Activated B cell treated with CpG ODN at 0.5 μM for 24 hours (primary cell): ENCODE measurements at regions of chr5 and their contacts with region 1.

Region 1: DNA sequence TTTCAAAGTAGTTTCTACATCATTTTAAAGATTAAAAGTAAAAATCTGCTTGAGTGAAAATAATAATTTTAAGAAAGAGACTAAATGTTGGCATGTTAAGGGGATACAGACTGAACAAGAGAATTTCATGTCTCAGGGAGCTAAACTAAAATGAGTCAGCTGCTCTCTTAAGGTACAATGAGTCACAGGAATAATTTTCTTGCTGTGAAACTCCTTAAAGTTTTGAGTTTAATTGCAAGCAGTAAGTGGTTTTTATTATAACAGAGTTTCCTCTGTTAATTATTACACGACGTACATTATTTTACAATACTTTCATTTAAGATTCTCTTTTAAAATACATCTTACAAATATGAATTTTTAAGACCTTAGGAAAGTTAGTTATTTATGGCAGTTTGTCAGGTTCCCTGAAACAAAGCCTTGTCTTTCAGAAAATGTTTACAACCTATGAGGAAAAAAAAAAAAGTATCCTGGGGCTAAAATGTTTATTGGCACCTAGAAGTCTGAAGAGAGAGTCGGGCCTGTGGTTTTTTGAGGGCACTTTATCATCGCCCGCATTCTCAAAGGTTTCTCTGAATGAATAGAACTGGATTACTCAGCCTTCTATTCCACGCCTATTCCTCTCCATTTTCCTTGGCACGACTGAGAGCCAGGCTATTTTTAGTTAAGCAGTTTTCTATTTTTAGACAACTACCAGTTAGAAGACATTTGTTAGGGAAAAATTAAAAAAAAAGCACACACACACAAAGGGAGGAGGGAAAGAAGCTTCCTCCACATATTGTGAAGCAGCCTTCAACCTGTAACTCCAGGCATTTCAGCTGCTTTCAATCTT is 97.4 kb downstream of the MEF2C start:
- DNase-seq: no peak
- ATAC-seq: peak; percentile 52
- H3K4me3 Mint-ChIP-seq: peak overlapping the region; percentile 69
- H3K27ac Mint-ChIP-seq: peak overlapping the region; percentile 86
- H3K4me1 Mint-ChIP-seq: peaks cover 66% of the 10 kb centered on the region
- H3K27me3 Mint-ChIP-seq: no peaks in the 10 kb centered on the region
- CTCF ChIP-seq: no peak

Region 2: DNA sequence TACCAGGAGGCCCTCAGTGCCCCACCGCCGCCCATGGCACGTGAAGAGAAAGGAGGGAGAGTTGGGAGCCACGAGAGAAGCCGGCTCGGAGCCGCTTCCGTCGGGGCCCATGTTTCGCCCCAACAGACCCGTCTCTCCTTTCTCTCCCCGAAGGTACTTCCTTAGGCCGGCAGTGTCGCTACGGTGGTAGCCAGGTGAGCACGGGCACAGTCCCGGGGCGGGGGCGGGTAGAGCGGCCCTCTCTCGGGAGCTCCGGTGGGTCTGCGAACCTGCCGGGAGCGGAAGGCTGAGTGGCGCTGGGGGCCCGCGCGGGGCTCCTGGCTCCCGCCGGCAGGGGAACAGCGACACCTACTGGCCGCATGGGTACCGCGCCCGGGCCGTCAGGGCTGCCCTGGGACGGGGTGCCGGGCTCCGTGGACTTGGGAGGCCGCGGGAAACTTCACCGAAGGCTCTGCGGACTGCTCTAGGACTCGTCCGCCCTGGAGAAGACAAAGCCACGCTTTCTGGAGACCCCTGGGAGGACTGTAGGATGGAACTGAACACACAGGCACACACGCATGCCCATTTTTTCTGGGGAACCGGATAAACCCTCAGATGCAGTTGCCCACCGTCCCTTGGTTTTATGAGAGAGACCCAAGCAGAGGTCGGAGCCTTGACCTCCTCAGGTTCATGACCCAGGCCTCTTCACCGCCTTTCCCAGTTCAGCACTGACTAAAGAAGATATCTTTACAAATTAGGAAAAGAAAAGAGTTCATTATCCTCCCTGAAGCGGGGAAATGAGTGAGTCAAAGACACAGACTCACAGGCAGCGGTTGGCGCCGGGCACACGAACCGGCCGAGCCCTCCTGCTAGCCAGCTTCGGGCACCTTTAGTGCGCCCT is 105.1 kb before region 1 on chr5:
- CTCF ChIA-PET with region 1: no interaction called
- POLR2A ChIA-PET with region 1: no interaction called
- intact Hi-C with region 1: no loop called
- DNase-seq: peak; percentile 74
- ATAC-seq: peak; percentile 74
- H3K4me3 Mint-ChIP-seq: peak overlapping the region; percentile 24
- H3K27ac Mint-ChIP-seq: no peak overlapping the region
- H3K4me1 Mint-ChIP-seq: peaks cover 12% of the 10 kb centered on the region
- H3K27me3 Mint-ChIP-seq: peaks cover 61% of the 10 kb centered on the region
- CTCF ChIP-seq: no peak

Region 3: GRCh38 chr5:88760512-88760911 is 25.1 kb before region 1 on chr5:
- CTCF ChIA-PET with region 1: no interaction called
- POLR2A ChIA-PET with region 1: no interaction called
- intact Hi-C with region 1: no loop called
- DNase-seq: no peak
- ATAC-seq: no peak
- H3K4me3 Mint-ChIP-seq: no peak overlapping the region
- H3K27ac Mint-ChIP-seq: peak overlapping the region; percentile 70
- H3K4me1 Mint-ChIP-seq: peaks cover 30% of the 10 kb centered on the region
- H3K27me3 Mint-ChIP-seq: no peaks in the 10 kb centered on the region
- CTCF ChIP-seq: no peak

Region 4: DNA sequence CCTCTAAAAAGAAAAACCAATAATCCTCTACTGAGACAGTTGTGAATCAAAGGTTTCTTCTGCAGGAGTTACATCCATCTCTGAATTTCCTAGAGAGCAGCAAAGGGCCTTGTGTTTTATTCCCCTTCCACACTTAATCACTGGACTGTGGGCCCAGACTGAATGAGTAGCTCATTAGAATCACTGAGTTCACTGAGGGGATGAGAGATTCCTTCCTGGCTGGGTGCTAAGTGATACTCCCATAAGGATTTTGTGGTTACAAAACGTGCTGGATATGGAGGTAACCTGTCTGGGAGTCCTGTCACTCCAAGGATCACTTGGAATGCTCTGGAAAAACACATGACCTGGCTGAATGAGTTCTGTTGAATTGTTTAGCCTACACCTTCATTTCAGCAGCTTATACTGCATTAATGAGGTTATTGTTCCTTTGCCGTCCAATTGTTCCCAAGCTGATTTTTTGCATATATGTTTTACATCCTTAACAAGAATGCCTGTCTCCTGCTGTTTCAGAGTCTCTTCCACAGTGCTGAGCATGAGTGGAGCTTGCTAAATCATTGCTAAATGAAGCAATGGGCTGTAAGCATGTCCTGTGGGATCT is 14.4 kb after region 1 on chr5:
- CTCF ChIA-PET with region 1: interaction called, 3 read pairs
- POLR2A ChIA-PET with region 1: no interaction called
- intact Hi-C with region 1: loop called (anchors 1 kb)
- DNase-seq: no peak
- ATAC-seq: no peak
- H3K4me3 Mint-ChIP-seq: no peak overlapping the region
- H3K27ac Mint-ChIP-seq: peak overlapping the region; percentile 41
- H3K4me1 Mint-ChIP-seq: peaks cover 39% of the 10 kb centered on the region
- H3K27me3 Mint-ChIP-seq: no peaks in the 10 kb centered on the region
- CTCF ChIP-seq: no peak

Region 5: DNA sequence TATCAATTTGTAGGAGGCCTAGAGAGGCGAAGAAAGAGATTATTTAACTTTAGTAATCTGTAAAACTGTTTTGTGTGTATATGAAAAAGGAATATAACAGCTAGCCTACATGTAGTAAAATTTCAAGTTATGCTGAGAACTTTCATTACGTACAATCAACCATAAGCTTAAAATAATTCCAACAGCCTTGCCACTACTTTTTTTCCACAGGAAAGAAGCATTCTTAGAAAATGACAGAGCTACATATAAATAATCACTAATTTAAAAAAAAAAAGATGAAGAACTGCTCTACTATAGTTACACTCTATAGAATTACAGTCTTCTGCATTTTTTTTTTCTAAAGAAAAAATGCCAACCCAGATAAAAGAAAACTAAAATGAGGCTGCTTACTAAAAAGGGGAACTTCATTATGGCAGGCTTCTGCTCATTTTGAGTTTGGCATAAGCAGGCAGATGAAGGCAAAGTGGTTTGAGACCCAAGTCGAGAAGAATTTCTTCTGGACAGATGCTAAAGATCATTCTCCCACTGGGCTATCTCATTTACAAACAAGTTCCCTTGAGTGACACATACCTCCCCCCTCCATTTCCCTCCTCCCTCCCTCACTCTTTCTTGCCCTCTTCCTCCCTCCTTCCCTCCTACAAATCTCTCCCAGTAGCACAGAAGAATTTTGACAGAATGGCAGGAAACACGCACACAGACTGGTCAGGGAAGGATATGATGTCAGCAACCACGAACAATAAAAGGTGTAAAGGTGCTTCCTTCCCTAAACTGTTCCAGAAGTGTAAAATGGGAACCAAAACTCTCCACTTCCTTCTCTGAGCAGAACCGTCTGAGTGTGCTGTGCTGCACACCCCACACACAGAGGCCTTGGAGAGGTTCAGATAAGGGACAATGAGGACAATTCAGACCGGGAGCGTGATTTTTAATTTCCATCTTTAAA is 41.3 kb after region 1 on chr5:
- CTCF ChIA-PET with region 1: interaction called, 3 read pairs
- POLR2A ChIA-PET with region 1: interaction called, 7 read pairs
- intact Hi-C with region 1: loop called (anchors 2 kb)
- DNase-seq: peak; percentile 31
- ATAC-seq: peak; percentile 77
- H3K4me3 Mint-ChIP-seq: peak overlapping the region; percentile 72
- H3K27ac Mint-ChIP-seq: peak overlapping the region; percentile 91
- H3K4me1 Mint-ChIP-seq: peaks cover 93% of the 10 kb centered on the region
- H3K27me3 Mint-ChIP-seq: no peaks in the 10 kb centered on the region
- CTCF ChIP-seq: no peak